HepG2 (cell line): ENCODE measurements at regions of chr14 and their contacts with region 1.

Region 1: DNA sequence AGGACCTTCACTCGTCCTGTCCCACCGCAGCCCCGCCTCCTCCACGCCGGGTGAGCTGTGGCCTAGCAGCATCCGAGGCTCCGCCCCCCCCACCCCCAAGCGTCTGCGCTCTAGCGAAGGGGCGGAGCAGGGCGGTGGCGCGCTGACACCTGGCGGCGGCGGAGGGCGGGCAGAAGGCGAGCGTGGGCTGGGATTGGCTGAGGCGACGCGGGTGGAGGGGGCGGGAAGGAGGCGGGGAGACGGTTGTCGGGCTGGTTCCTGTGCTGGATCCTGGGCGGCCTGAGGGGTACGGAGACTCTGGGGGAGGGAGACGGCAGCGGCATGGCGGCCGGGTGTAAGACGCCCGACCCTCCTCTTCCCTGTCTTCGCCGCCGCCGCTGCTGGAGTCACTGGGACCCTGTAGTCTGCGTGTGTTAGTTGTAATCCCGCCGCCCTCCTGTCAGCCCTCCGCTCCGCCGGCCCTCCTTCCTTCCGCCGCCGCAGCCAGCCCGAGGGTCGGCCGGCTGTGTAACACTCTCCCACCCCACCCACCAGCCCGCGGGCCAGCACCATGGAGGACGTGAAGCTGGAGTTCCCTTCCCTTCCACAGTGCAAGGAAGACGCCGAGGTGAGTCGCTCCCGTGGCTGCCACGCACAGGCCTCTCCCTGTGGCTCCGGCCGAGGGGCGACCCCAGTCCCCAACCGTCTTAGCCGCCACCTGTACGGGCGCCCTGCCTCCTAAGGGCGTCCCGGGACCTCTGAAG is at the start of gene STYX:
- DNase-seq: peak; percentile 95
- ATAC-seq: peak; percentile 98
- H3K4me3 ChIP-seq: peak within 1 kb of the TSS; percentile 90 to 99 (median 90)
- H3K27ac ChIP-seq: peak within 1 kb of the TSS; percentile 63
- H3K4me1 ChIP-seq: peaks cover 29% of the 10 kb centered on the region
- H3K27me3 ChIP-seq: no peaks in the 10 kb centered on the region; a peak in 1 of 5 replicates
- CTCF ChIP-seq: peak; percentile 32; the same call in 1 of the 2 replicates
- EP300 ChIP-seq: no peak
- POLR2A ChIP-seq: peak; percentile 89 to 98
- RAD21 ChIP-seq: no peak
- total RNA-seq, gene STYX: 10.9 and 15.6 TPM in 2 replicates

Region 2: DNA sequence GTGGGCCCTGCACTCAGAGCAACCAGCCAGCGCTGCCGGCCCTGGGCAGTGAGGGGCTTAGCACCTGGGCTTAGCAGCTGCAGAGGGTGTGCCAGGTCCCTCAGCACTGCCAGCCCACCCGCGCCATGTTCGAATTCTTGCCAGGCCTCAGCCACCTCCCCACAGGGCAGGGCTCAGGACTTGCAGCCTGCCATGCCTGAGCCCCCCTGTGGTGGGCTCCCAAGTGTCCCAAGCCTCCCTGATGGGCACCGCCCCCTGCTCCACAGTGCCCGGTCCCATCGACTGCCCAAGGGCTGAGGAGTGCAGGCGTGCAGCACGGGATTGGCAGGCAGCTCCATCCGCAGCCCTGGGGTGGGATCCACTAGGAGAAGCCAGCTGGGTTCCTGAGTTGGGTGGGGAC is 563.3 kb before region 1 on chr14:
- CTCF ChIA-PET with region 1: no interaction called
- POLR2A ChIA-PET with region 1: no interaction called
- in situ Hi-C with region 1: no loop called
- intact Hi-C with region 1: no loop called
- DNase-seq: no peak
- ATAC-seq: no peak
- H3K4me3 ChIP-seq: no peak overlapping the region
- H3K27ac ChIP-seq: no peak overlapping the region
- H3K4me1 ChIP-seq: no peaks in the 10 kb centered on the region
- H3K27me3 ChIP-seq: no peaks in the 10 kb centered on the region
- CTCF ChIP-seq: no peak
- EP300 ChIP-seq: no peak
- POLR2A ChIP-seq: no peak
- RAD21 ChIP-seq: no peak

Region 3: DNA sequence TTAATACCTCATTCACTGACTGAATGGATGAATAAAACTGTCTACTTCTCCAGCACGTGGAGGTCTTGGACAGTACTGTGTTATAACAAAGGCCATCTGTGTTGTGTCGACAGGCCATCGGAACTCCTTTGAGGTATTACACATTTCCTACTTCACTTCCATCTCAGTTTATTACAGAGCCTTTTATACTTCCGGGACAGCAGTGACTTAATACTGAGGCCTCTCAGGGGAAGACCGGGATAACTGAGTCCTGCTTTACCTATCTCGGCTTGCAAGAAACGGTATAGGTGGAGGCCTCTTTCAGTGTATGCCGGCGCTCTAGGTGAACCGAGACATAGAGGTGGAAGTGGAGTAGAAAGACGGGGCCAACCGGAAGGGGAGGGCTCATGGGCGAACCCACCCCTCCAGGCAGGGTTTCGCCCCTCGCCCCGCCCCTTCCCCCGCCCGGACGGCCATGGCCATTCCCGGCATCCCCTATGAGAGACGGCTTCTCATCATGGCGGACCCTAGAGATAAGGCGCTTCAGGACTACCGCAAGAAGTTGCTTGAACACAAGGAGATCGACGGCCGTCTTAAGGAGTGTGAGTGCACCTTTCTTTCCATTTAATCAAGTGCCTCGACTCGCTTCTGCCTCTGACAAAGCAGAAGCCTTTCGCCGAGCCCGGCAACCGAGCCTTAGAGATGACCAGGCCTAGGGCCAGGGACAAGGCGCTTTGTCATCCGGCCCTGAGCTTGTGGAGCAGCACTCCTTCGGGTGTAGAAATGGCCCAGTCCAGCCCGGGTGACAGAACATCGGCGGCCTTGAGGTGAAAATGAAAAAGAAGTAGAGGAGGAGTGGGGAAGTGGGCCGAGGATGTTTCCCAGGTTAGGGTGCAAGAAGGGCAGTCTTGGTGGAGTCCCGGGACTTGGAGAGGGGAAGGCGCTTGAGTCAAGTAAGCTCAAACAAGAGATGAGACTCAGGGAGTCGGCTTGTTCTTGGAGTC is 23.1 kb before region 1 on chr14 and contains the start of gene PSMC6:
- CTCF ChIA-PET with region 1: no interaction called
- POLR2A ChIA-PET with region 1: interaction called, 17 read pairs
- in situ Hi-C with region 1: no loop called
- intact Hi-C with region 1: no loop called
- DNase-seq: peak; percentile 89
- ATAC-seq: peak; percentile 98
- H3K4me3 ChIP-seq: peak within 1 kb of the TSS; percentile 85 to 94 (median 87)
- H3K27ac ChIP-seq: peak within 1 kb of the TSS; percentile 99
- H3K4me1 ChIP-seq: peaks cover 44% of the 10 kb centered on the region
- H3K27me3 ChIP-seq: no peaks in the 10 kb centered on the region; a peak in 1 of 5 replicates
- CTCF ChIP-seq: 0 out of 2 replicates have a peak, but pooled peaks have one; percentile 9
- EP300 ChIP-seq: no peak
- POLR2A ChIP-seq: peak; percentile 90 to 96
- RAD21 ChIP-seq: no peak
- total RNA-seq, gene PSMC6: 210 and 318 TPM in 2 replicates

Region 4: GRCh38 chr14:52755607-52756253 is 25.6 kb after region 1 on chr14:
- CTCF ChIA-PET with region 1: no interaction called
- POLR2A ChIA-PET with region 1: interaction called, 19 read pairs
- in situ Hi-C with region 1: no loop called
- intact Hi-C with region 1: no loop called
- DNase-seq: peak; percentile 95
- ATAC-seq: peak; percentile 99
- H3K4me3 ChIP-seq: peak overlapping the region in 2 of 3 experiments; percentile 22 to 24; a peak in 2 of 6 replicates
- H3K27ac ChIP-seq: peak overlapping the region; percentile 78
- H3K4me1 ChIP-seq: peaks cover 38% of the 10 kb centered on the region
- H3K27me3 ChIP-seq: no peaks in the 10 kb centered on the region
- CTCF ChIP-seq: no peak
- EP300 ChIP-seq: peak in 1 of 2 experiments; percentile 76; a peak in 2 of 4 replicates
- POLR2A ChIP-seq: no peak
- RAD21 ChIP-seq: no peak

Region 5: GRCh38 chr14:52776816-52777215 is 46.7 kb after region 1 on chr14:
- CTCF ChIA-PET with region 1: no interaction called
- POLR2A ChIA-PET with region 1: no interaction called
- in situ Hi-C with region 1: no loop called
- intact Hi-C with region 1: loop called (anchors 10 kb)
- DNase-seq: peak; percentile 17
- ATAC-seq: peak; percentile 38
- H3K4me3 ChIP-seq: no peak overlapping the region
- H3K27ac ChIP-seq: peak overlapping the region; percentile 33
- H3K4me1 ChIP-seq: 0 out of 2 replicates have a peak, but pooled peaks cover 9% of the 10 kb centered on the region
- H3K27me3 ChIP-seq: no peaks in the 10 kb centered on the region
- CTCF ChIP-seq: peak; percentile 55
- EP300 ChIP-seq: no peak
- POLR2A ChIP-seq: no peak
- RAD21 ChIP-seq: no peak